ENCODE measurements at regions of chr17 and their contacts with region 1.

Region 1: GRCh38 chr17:5225668-5226457 is 8.8 kb downstream of the SCIMP start:
- DNase-seq: no peak
- H3K4me3 ChIP-seq: no peak overlapping the region
- H3K27ac ChIP-seq: no peak overlapping the region
- H3K4me1 ChIP-seq: no peaks in the 10 kb centered on the region
- H3K27me3 ChIP-seq: no peaks in the 10 kb centered on the region
- CTCF ChIP-seq: no peak

Region 2: DNA sequence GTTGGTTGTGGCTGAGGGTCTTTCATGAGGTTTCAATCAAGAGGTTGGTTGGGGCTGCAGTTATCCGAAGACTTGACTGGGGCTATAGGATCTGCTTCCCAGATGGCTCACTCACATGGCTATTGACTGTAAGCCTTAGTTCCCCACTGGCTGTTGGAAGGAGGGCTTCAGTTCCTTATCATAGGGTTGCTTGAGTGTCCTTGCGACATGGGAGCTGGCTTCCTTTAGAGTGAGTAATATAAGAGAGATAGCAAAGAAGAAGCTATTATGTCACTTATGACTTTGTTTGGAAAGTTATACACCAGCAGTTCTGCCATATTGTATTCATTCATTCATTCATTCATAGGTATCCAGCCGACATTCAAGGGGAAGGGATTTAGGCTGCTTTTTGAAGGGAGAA is 722.9 kb after region 1 on chr17:
- CTCF ChIA-PET with region 1: no interaction called
- POLR2A ChIA-PET with region 1: interaction called, 11 read pairs
- intact Hi-C with region 1: no loop called
- DNase-seq: no peak
- H3K4me3 ChIP-seq: no peak overlapping the region
- H3K27ac ChIP-seq: no peak overlapping the region
- H3K4me1 ChIP-seq: no peaks in the 10 kb centered on the region
- H3K27me3 ChIP-seq: peaks cover 91% of the 10 kb centered on the region
- CTCF ChIP-seq: no peak

Measured in PC-9 (cell line).